ENCODE measurements at regions of chrX and their contacts with region 1.

Region 1: DNA sequence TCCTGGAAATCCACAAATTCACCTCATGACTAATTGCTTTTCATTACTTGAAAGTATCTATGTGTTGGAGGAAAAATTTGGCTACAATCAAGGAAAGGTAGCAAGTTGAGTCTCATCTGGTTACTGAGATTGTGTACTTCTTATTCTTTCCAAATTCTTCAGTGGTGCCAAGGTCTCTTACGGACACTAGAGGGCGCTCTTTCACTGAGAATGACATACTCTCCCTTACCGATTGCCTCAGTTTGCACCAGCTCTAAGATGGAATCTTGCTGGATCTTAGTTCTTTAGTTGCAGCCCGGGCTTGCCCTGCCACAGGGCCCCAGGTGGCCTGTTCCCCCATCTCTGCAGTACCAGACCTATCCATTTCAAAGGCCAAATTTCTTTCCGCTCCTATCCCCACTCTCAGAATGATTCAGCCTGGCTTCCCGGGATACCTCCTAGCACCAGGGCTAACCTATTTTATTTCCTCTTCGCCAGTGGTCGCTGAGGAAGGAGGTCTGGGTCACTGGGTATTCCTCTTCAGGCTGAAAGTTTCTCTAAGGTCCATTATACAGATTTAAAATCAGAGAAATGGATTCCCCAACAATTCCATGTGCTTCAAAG is 24.6 kb upstream of the GPR50 start:
- DNase-seq: peak; percentile 40
- H3K4me3 ChIP-seq: no peak overlapping the region
- H3K27ac ChIP-seq: no peak overlapping the region
- H3K4me1 ChIP-seq: no peaks in the 10 kb centered on the region
- H3K27me3 ChIP-seq: no peaks in the 10 kb centered on the region
- CTCF ChIP-seq: peak; percentile 46 to 55
- POLR2A ChIP-seq: no peak

Region 2: DNA sequence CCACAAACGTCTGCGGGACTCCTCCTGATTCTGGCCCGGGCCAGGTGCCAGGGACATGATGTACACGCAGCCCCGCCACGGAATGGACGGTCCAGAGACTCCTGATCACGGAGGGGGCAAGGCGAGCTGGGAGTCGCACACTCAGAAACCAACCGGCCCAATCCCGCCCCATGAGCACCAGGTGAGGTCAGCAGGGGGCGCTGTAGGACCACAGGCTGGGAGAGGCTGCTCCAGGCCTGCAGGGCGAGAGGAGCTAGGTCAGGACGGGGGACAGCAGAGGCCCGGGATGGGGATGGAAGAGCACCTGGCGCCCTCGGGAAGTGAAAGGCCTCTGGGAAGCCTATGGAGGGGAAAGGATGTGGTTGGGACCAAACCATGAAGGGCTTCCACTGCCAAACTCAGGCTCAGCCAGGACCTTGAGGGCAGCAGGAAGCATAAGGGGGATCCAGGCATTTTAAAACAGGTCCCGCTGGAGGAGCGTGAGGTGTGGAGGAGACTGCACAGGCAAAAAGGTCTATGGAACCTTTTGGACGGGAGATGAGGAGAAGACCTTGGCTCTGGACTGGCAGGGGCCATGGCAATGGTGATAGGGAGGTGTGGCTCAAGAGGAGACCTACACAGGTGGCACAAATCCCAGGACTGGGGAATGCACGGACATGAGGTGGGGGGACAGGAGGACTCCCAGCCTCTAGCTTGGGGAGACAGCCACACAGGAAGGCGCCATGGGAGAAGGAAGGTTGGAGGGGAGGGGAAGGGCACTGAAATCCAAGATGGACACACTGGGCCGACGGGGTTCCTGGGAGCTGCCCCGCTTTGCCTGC is 379.4 kb before region 1 on chrX:
- CTCF ChIA-PET with region 1: interaction called, 5 read pairs
- POLR2A ChIA-PET with region 1: no interaction called
- dilution Hi-C with region 1: no loop called
- intact Hi-C with region 1: loop called (anchors 2 kb)
- DNase-seq: peak; percentile 45
- H3K4me3 ChIP-seq: no peak overlapping the region
- H3K27ac ChIP-seq: no peak overlapping the region
- H3K4me1 ChIP-seq: no peaks in the 10 kb centered on the region
- H3K27me3 ChIP-seq: no peaks in the 10 kb centered on the region
- CTCF ChIP-seq: peak; percentile 64 to 82
- POLR2A ChIP-seq: no peak

Region 3: DNA sequence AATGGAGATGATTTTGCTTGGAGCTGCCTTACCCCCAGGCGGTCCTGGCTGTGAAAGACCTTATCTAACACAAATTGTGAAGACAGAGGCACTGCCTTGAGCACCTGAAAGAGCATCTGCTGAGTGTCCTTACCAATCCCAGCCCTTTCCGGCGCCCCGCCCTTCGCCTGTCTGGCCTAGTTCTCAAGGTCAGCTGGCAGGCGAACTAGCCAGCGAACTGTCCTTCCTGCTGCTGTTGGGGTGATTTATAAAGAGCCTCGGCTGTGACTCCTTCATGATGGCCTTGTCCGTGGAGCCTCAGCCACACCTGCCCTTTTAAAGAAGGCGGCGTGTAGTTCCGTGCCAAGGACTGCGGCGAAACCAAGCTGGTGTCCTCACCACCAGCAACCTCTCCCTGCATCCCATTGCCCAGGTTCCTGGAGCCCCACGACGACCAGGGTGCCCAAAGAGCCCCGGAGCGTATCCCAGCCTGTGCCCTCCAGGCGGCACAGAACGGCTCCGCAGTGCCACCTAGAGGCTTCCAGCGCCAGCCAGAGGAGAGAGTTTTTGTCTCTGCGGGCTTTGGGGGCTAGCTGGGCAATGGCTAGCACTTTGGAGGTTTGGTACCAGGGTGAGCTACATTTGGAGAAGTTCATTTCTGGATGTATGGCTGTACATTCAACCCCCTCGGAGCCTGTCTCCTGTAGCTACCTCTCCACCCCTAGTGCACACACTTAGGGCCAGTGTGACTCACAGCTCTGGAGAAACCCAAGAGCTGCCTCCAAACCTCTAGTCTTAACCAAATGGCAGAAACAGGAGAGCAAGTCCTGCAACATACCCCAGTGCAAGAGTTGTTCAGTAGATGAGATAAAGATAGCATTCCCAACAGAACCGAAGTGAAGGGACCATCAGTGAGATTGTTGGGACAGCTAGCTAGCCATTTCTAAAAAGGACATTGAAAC is 208.4 kb after region 1 on chrX:
- CTCF ChIA-PET with region 1: interaction called, 11 read pairs
- POLR2A ChIA-PET with region 1: no interaction called
- dilution Hi-C with region 1: no loop called
- intact Hi-C with region 1: loop called (anchors 1 kb)
- DNase-seq: peak; percentile 12
- H3K4me3 ChIP-seq: no peak overlapping the region
- H3K27ac ChIP-seq: no peak overlapping the region
- H3K4me1 ChIP-seq: no peaks in the 10 kb centered on the region
- H3K27me3 ChIP-seq: peaks cover 0 to 3% of the 10 kb centered on the region in 2 experiments
- CTCF ChIP-seq: peak; percentile 46 to 77
- POLR2A ChIP-seq: no peak

Region 4: DNA sequence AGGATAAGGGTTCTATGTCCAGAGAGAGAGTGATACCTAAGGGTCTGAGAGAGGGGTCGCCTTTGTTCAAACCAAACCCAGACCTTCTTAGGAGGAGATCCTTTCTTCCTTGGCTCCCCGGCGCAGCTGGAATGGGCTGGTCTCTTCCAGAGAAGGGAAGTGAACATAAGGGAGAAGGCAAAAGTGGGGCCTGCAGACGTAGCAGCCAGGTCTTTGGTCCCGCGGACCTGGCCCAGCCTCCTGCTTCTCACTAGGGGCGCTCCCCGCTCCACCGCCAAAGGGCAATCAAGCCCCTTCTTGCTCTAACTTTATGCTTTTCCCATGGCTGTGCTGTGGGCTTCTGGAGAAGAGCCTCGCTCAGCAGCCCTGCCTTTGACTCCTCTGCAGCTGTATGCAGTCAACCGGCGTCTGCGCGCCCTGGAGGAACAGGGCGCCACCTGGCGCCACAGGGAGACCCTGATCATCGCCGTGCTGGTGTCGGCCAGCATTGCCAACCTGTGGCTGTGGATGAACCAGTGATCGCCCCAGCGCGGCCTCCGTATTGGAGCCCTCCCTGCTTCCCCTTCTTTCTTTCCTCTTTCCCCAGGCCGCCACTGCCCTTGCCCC is 570.6 kb after region 1 on chrX:
- CTCF ChIA-PET with region 1: interaction called, 11 read pairs
- POLR2A ChIA-PET with region 1: no interaction called
- dilution Hi-C with region 1: no loop called
- intact Hi-C with region 1: loop called (anchors 1 kb)
- DNase-seq: no peak
- H3K4me3 ChIP-seq: no peak overlapping the region
- H3K27ac ChIP-seq: no peak overlapping the region
- H3K4me1 ChIP-seq: no peaks in the 10 kb centered on the region
- H3K27me3 ChIP-seq: no peaks in the 10 kb centered on the region
- CTCF ChIP-seq: peak in 1 of 2 donors; percentile 38
- POLR2A ChIP-seq: no peak

Region 5: GRCh38 chrX:152632445-152633097 is 1480.8 kb after region 1 on chrX:
- CTCF ChIA-PET with region 1: interaction called, 6 read pairs
- POLR2A ChIA-PET with region 1: no interaction called
- dilution Hi-C with region 1: no loop called
- intact Hi-C with region 1: loop called (anchors 2 kb)
- DNase-seq: peak; percentile 37
- H3K4me3 ChIP-seq: no peak overlapping the region
- H3K27ac ChIP-seq: no peak overlapping the region
- H3K4me1 ChIP-seq: no peaks in the 10 kb centered on the region
- H3K27me3 ChIP-seq: peaks cover 6 to 7% of the 10 kb centered on the region in 2 experiments
- CTCF ChIP-seq: peak; percentile 58 to 63
- POLR2A ChIP-seq: no peak

Region 6: DNA sequence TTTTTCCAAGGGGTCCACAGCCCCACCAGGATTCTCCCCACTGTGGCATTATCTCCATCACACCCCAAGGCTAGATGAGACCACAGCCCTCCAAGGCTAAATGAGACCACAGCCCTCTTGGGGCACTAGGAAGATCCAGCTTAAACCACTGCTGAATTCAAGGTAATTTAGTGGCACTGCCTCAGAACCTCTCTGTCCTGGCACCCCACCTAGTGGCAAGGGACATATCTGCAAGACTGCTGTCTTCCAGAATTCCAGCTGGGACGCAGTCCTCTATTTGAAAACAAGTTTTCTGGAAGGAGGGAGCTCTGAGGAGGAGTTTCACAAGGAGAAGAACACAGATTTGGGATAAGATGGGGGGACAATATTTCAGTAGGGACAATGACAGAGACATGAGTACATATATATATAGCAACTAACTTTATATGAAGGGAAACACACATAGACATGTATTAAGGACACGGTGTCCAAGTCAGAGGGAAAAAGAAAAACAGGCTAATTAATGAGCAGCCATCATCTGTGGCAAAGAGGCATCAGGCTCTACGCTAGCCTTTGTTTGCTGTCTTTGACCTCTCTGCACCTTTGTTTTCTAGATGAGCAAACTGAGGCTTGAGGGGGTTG is 1669.5 kb after region 1 on chrX:
- CTCF ChIA-PET with region 1: interaction called, 5 read pairs
- POLR2A ChIA-PET with region 1: no interaction called
- dilution Hi-C with region 1: no loop called
- intact Hi-C with region 1: loop called (anchors 5 kb)
- DNase-seq: peak; percentile 31
- H3K4me3 ChIP-seq: no peak overlapping the region
- H3K27ac ChIP-seq: no peak overlapping the region
- H3K4me1 ChIP-seq: peaks cover 4% of the 10 kb centered on the region
- H3K27me3 ChIP-seq: peaks cover 1 to 3% of the 10 kb centered on the region in 2 experiments
- CTCF ChIP-seq: peak; percentile 51 to 59
- POLR2A ChIP-seq: no peak